ENCODE measurements at regions of chr4 and their contacts with region 1.

Region 1: GRCh38 chr4:153083447-153083947 is 120.7 kb upstream of the TRIM2 start:
- DNase-seq: peak in 7 of 10 donors; percentile 44 to 89 (median 63)

Region 2: DNA sequence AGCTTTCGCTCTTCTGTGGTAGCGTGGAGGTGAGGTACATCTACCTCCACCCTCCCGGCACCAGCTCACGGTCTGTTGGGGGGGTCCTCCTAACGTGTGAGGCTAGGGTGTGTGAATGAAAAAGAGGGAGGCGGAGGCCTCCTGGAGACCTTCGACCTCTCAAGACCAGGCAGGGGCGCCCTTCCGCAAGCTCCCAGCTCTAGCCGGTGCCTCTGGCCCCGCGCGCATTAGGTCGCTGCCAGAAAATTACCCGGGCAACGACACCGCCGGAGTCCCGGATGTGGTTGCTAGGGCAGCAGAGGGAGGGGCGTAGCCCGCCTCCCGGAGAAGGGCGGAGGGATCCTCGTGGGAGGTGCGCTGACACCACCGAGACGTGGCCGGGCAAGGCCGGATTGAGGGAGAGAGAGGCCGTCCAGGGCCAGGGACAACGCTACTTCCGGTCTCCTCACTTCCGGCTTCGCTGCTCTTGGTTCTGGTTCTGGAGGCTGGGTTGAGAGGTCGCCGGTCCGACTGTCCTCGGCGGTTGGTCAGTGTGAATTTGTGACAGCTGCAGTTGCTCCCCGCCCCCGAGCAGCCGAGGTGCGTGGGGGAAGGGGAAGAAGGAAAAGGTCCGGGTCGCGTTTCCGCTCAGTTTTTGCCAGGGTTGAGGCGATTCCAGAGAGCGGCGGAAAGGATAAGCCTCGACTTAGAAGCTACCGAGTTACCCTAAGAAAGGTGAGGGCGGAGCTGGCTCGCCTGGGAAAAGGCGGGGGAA is 303.8 kb before region 1 on chr4 and contains the starts of genes ARFIP1 and TIGD4:
- intact Hi-C with region 1: loop called (anchors 5 kb)
- DNase-seq: peak; percentile 98 to 100 (median 99)

Region 3: DNA sequence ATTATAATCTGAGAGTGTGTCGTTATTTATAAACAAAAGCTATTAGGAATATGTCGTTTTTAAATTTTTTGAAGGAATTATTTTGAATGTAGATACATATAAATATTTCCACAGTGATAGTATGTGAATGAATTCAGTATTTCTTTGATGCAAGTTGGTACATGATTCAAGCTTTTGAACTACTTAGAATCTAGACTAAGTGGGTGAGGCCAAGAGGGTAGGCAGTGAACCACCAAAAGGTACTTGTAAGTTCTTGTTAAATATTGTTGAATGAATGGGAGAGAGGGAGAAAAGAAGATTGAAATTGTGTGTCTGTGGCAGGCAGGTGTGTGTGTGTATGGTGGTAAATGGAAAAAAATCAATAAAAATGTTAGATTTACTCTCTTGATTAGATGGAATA is 234.1 kb before region 1 on chr4:
- intact Hi-C with region 1: loop called (anchors 2 kb)
- DNase-seq: no peak

Region 4: GRCh38 chr4:153045111-153045982 is 38.1 kb before region 1 on chr4:
- intact Hi-C with region 1: no loop called
- DNase-seq: no peak

Region 5: DNA sequence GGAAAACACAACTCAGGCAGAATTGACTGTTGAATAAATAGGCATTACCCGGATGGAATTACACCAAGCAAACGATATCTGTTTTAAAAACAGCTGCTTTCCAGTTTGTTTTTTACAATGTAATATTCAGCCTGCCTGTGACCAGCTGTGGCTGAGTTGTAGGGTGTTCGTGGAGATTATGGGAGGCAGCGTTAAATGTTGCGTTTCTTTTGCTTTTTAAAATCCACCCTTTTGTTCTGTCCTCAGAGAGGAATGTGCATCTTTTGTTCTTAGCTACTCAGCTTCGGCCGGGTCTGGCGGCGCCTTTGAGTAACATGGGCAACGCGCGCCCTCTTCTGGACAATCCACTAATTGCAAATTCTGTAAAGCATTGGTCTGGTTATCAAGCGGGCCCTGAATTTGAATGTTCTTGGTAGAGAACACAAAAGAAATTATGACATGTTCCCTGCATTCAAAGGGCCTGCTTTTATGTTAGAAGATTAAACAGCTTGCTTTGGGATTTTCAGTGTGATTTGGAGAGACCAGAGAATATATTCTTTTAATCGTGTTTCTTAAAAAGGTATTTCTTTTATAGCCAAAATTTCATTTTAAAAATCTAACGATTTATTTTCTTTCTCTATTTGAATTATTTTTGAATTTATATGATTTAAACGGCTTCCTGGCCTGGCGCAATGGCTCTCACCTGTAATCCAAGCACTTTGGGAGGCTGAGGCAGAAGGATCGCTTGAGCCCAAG is 44.4 kb after region 1 on chr4:
- intact Hi-C with region 1: loop called (anchors 1 kb)
- DNase-seq: peak; percentile 78 to 98 (median 92)